ENCODE measurements at regions of chr6 and their contacts with region 1.

Region 1: GRCh38 chr6:36917541-36918193 is 31.9 kb downstream of the C6orf89 start:
- DNase-seq: no peak
- ATAC-seq: peak; percentile 70

Region 2: GRCh38 chr6:36241728-36242127 is 675.9 kb before region 1 on chr6:
- intact Hi-C with region 1: no loop called
- DNase-seq: peak; percentile 51
- ATAC-seq: no peak

Region 3: GRCh38 chr6:36862164-36862847 is 55.4 kb before region 1 on chr6:
- intact Hi-C with region 1: no loop called
- DNase-seq: no peak
- ATAC-seq: no peak

Region 4: DNA sequence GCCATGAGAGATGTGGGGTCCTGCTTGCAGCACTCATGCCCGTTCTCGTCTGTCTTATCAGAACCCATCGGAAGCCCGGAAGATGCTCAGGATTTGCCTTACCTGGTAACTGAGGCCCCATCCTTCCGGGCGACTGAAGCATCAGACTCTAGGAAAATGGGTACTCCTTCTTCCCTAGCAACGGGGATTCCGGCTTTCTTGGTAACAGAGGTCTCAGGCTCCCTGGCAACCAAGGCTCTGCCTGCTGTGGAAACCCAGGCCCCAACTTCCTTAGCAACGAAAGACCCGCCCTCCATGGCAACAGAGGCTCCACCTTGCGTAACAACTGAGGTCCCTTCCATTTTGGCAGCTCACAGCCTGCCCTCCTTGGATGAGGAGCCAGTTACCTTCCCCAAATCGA is 45.2 kb after region 1 on chr6:
- intact Hi-C with region 1: loop called (anchors 5 kb)
- DNase-seq: peak; percentile 90
- ATAC-seq: peak; percentile 20

Measured in Right ventricle myocardium inferior (tissue), 1 donor.